Natural killer cell (primary cell): ENCODE measurements at regions of chr12 and their contacts with region 1.

Region 1: DNA sequence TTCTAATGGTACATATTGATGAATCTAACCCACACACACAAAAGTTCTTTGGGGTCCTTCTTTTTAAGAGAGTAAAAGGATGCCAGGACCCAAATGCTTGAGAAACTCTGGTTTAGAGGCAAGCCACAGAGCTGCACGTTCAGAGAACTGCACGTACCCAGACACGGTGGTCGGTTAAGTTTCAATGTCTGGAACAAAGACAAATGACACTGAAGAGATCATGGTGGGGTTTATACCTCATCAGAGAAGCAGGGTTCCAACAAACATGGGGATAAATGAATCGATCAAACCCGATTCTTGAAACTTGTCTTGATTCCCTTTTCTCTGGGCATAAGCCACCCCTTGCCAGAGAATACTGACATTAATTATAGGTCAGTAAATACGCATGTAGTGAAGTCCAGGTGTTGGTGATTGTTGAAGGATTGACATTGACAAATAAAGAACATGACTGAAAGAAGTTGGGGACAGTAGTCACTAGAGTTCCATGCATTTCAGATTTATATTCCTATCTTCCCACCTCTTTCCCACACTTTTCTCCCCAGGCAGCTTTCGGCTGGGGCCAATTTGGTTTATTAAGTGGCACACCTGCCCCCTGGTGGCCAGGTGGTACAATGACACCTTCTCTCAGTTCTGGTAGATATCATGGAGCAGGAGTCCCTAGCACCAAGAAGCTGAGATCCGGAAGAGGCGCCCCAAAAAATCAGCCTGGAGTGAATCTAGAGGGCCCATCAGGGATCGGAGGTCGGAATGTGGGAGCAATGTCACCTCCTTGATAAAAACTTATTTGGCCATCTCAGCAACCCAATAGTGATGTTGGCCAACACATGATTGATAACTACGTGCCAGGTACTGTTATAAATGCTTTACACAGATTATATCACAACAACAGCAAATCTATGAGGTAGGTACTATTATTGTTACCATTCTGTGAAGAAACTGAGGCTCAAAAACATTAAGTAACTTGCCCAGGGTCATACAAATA is 17.8 kb upstream of the HDAC7 start:
- DNase-seq: peak; percentile 63 to 88
- ATAC-seq: peak; percentile 55 to 62 (median 57)
- H3K4me3 ChIP-seq: no peak overlapping the region
- H3K4me3 Mint-ChIP-seq: no peak overlapping the region
- H3K27ac ChIP-seq: no peak overlapping the region
- H3K27ac Mint-ChIP-seq: peak overlapping the region in 1 of 2 donors; percentile 35
- H3K4me1 ChIP-seq: peaks cover 35% of the 10 kb centered on the region
- H3K4me1 Mint-ChIP-seq: peaks cover 43 to 47% of the 10 kb centered on the region in 2 donors
- H3K27me3 ChIP-seq: no peaks in the 10 kb centered on the region
- H3K27me3 Mint-ChIP-seq: peaks cover 0 to 5% of the 10 kb centered on the region in 2 donors
- CTCF ChIP-seq: peak; percentile 93

Region 2: GRCh38 chr12:47651368-47652254 is 185.9 kb before region 1 on chr12:
- intact Hi-C with region 1: loop called (anchors 5 kb)
- DNase-seq: peak in 1 of 2 donors; percentile 74
- ATAC-seq: peak; percentile 90 to 99 (median 96)
- H3K4me3 ChIP-seq: no peak overlapping the region
- H3K4me3 Mint-ChIP-seq: peak overlapping the region; percentile 30
- H3K27ac ChIP-seq: no peak overlapping the region
- H3K27ac Mint-ChIP-seq: peak overlapping the region; percentile 39 to 70
- H3K4me1 ChIP-seq: peaks cover 4% of the 10 kb centered on the region
- H3K4me1 Mint-ChIP-seq: peaks cover 0 to 8% of the 10 kb centered on the region in 2 donors
- H3K27me3 ChIP-seq: no peaks in the 10 kb centered on the region
- H3K27me3 Mint-ChIP-seq: no peaks in the 10 kb centered on the region
- CTCF ChIP-seq: peak; percentile 79

Region 3: DNA sequence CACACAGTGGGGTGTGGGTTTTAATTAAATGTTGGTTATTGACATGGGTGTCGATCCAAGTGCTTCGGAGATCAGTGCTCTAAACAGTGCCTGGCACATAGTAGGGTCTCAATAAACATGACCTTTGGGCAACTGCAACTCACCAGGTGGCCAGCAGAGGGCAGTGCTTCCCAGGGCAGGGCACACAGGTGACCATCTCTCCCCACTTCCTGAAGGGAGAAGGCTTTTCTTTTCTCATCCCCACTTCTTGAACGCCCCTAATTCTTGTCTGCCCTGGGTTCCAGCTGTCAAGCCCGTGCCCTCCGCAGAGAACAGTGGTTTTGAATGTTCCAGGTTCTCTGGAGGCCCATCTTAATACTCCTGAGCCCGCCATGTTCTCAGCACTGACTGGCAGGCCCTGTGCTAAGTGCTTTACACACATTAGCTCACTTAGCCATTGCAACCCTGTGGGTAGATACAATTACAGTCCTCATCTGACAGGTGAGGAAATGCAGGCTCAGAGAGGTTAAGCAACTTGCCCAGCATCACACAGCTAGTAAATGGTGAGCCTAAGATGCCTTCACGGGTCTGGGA is 95.1 kb before region 1 on chr12:
- intact Hi-C with region 1: loop called (anchors 1 kb)
- DNase-seq: peak; percentile 69 to 82
- ATAC-seq: peak; percentile 56 to 64 (median 57)
- H3K4me3 ChIP-seq: no peak overlapping the region
- H3K4me3 Mint-ChIP-seq: no peak overlapping the region
- H3K27ac ChIP-seq: no peak overlapping the region
- H3K27ac Mint-ChIP-seq: no peak overlapping the region
- H3K4me1 ChIP-seq: peaks cover 41% of the 10 kb centered on the region
- H3K4me1 Mint-ChIP-seq: peaks cover 17 to 38% of the 10 kb centered on the region in 2 donors
- H3K27me3 ChIP-seq: peaks cover 6% of the 10 kb centered on the region
- H3K27me3 Mint-ChIP-seq: peaks cover 18 to 19% of the 10 kb centered on the region in 2 donors
- CTCF ChIP-seq: peak; percentile 98

Region 4: GRCh38 chr12:47758834-47759690 is 78.4 kb before region 1 on chr12 and contains the start of gene RAPGEF3:
- intact Hi-C with region 1: no loop called
- DNase-seq: peak; percentile 54 to 81
- ATAC-seq: peak; percentile 86 to 91 (median 88)
- H3K4me3 ChIP-seq: peak within 1 kb of the TSS; percentile 60
- H3K4me3 Mint-ChIP-seq: peak within 1 kb of the TSS; percentile 84
- H3K27ac ChIP-seq: no peak within 1 kb of the TSS
- H3K27ac Mint-ChIP-seq: peak within 1 kb of the TSS in 1 of 2 donors; percentile 76
- H3K4me1 ChIP-seq: peaks cover 33% of the 10 kb centered on the region
- H3K4me1 Mint-ChIP-seq: peaks cover 6 to 21% of the 10 kb centered on the region in 2 donors
- H3K27me3 ChIP-seq: no peaks in the 10 kb centered on the region
- H3K27me3 Mint-ChIP-seq: peaks cover 4 to 8% of the 10 kb centered on the region in 2 donors
- CTCF ChIP-seq: peak; percentile 46
- total RNA-seq, gene RAPGEF3: 0.23 to 0.73 (median 0.49) TPM

Region 5: GRCh38 chr12:47779301-47779942 is 58.1 kb before region 1 on chr12:
- intact Hi-C with region 1: loop called (anchors 1 kb)
- DNase-seq: peak; percentile 91 to 94
- ATAC-seq: peak; percentile 92 to 98 (median 92)
- H3K4me3 ChIP-seq: no peak overlapping the region
- H3K4me3 Mint-ChIP-seq: no peak overlapping the region
- H3K27ac ChIP-seq: no peak overlapping the region
- H3K27ac Mint-ChIP-seq: peak overlapping the region; percentile 68 to 70
- H3K4me1 ChIP-seq: peaks cover 31% of the 10 kb centered on the region
- H3K4me1 Mint-ChIP-seq: peaks cover 7 to 33% of the 10 kb centered on the region in 2 donors
- H3K27me3 ChIP-seq: no peaks in the 10 kb centered on the region
- H3K27me3 Mint-ChIP-seq: peaks cover 0 to 4% of the 10 kb centered on the region in 2 donors
- CTCF ChIP-seq: peak; percentile 92

Region 6: GRCh38 chr12:47797441-47797840 is 40.0 kb before region 1 on chr12:
- intact Hi-C with region 1: loop called (anchors 1 kb)
- DNase-seq: peak in 1 of 2 donors; percentile 69
- ATAC-seq: peak; percentile 33 to 73 (median 71)
- H3K4me3 ChIP-seq: no peak overlapping the region
- H3K4me3 Mint-ChIP-seq: peak overlapping the region; percentile 56
- H3K27ac ChIP-seq: no peak overlapping the region
- H3K27ac Mint-ChIP-seq: peak overlapping the region; percentile 72 to 87
- H3K4me1 ChIP-seq: peaks cover 43% of the 10 kb centered on the region
- H3K4me1 Mint-ChIP-seq: peaks cover 28 to 40% of the 10 kb centered on the region in 2 donors
- H3K27me3 ChIP-seq: no peaks in the 10 kb centered on the region
- H3K27me3 Mint-ChIP-seq: no peaks in the 10 kb centered on the region
- CTCF ChIP-seq: peak; percentile 20

Region 7: GRCh38 chr12:47819896-47820630 is 17.4 kb before region 1 on chr12 and contains the start of gene HDAC7:
- intact Hi-C with region 1: loop called (anchors 2 kb)
- DNase-seq: peak; percentile 51 to 84
- ATAC-seq: peak; percentile 55 to 76 (median 69)
- H3K4me3 ChIP-seq: peak within 1 kb of the TSS; percentile 77
- H3K4me3 Mint-ChIP-seq: peak within 1 kb of the TSS; percentile 97
- H3K27ac ChIP-seq: peak within 1 kb of the TSS; percentile 86
- H3K27ac Mint-ChIP-seq: peak within 1 kb of the TSS; percentile 91 to 92
- H3K4me1 ChIP-seq: peaks cover 67% of the 10 kb centered on the region
- H3K4me1 Mint-ChIP-seq: peaks cover 52 to 57% of the 10 kb centered on the region in 2 donors
- H3K27me3 ChIP-seq: no peaks in the 10 kb centered on the region
- H3K27me3 Mint-ChIP-seq: no peaks in the 10 kb centered on the region
- CTCF ChIP-seq: no peak
- total RNA-seq, gene HDAC7: 141 to 235 (median 147) TPM